B cell (primary cell): ENCODE measurements at regions of chr22 and their contacts with region 1.

Region 1: GRCh38 chr22:38601221-38601764 is 31.3 kb upstream of the DMC1 start:
- DNase-seq: no peak
- ATAC-seq: no peak
- H3K4me3 ChIP-seq: no peak overlapping the region
- H3K4me3 Mint-ChIP-seq: no peak overlapping the region
- H3K27ac ChIP-seq: no peak overlapping the region
- H3K27ac Mint-ChIP-seq: no peak overlapping the region
- H3K4me1 ChIP-seq: no peaks in the 10 kb centered on the region
- H3K4me1 Mint-ChIP-seq: no peaks in the 10 kb centered on the region
- H3K27me3 ChIP-seq: no peaks in the 10 kb centered on the region
- H3K27me3 Mint-ChIP-seq: peaks cover 28% of the 10 kb centered on the region
- CTCF ChIP-seq: no peak

Region 2: DNA sequence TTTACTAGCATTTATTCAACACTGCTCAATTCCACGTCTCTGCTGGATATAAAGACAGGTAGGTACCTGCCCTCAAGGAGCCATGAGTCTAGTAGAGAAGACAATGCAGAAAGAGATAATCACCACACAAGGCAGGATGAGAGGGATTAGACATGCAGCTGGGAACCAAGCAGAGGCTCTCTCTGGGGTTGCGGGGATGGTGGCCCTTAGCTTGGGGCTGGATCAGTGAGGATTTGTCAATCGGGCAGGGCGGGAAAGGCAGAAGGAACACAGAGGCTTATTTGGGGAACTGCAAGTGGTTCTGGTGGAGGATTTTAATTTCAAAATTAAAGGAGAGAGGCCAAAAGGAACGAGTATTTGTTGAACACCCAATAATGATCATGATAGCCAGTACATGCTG is 22.8 kb before region 1 on chr22:
- CTCF ChIA-PET with region 1: no interaction called
- POLR2A ChIA-PET with region 1: interaction called, 10 read pairs
- intact Hi-C with region 1: no loop called
- DNase-seq: no peak
- ATAC-seq: no peak
- H3K4me3 ChIP-seq: no peak overlapping the region
- H3K4me3 Mint-ChIP-seq: no peak overlapping the region
- H3K27ac ChIP-seq: no peak overlapping the region
- H3K27ac Mint-ChIP-seq: no peak overlapping the region
- H3K4me1 ChIP-seq: no peaks in the 10 kb centered on the region
- H3K4me1 Mint-ChIP-seq: no peaks in the 10 kb centered on the region
- H3K27me3 ChIP-seq: no peaks in the 10 kb centered on the region
- H3K27me3 Mint-ChIP-seq: peaks cover 24% of the 10 kb centered on the region
- CTCF ChIP-seq: no peak